ENCODE measurements at regions of chr14 and their contacts with region 1.

Region 1: GRCh38 chr14:28608851-28609828 is 157.4 kb upstream of the FOXG1 start:
- DNase-seq: peak; percentile 39 to 49
- H3K4me3 ChIP-seq: no peak overlapping the region
- H3K27ac ChIP-seq: no peak overlapping the region
- H3K4me1 ChIP-seq: no peaks in the 10 kb centered on the region
- H3K27me3 ChIP-seq: no peaks in the 10 kb centered on the region
- CTCF ChIP-seq: peak; percentile 83

Region 2: DNA sequence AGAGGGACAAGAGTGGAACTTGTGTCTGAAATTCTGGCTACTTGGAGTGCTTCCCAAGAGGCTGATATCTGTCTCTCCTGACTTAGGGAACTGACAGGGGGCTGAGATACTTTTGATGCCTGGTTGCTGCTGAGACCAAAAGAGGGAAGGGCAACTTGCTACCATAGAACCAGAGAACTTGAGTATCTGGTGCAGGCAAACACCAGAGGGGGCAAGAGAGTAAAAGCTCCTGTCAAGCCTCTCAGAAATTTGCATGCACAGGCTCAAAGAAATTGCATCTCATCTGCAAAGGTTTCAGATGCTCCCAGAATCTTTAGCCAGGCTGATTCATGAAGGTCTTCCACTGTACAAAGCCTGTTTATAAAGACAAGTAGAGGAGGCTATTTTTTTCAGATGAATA is 233.8 kb before region 1 on chr14:
- CTCF ChIA-PET with region 1: no interaction called
- POLR2A ChIA-PET with region 1: no interaction called
- intact Hi-C with region 1: loop called (anchors 2 kb)
- DNase-seq: peak in 1 of 2 experiments; percentile 3
- H3K4me3 ChIP-seq: no peak overlapping the region
- H3K27ac ChIP-seq: no peak overlapping the region
- H3K4me1 ChIP-seq: no peaks in the 10 kb centered on the region
- H3K27me3 ChIP-seq: no peaks in the 10 kb centered on the region
- CTCF ChIP-seq: peak; percentile 52

Region 3: GRCh38 chr14:28707814-28708213 is 98.7 kb after region 1 on chr14:
- CTCF ChIA-PET with region 1: no interaction called
- POLR2A ChIA-PET with region 1: no interaction called
- intact Hi-C with region 1: no loop called
- DNase-seq: no peak
- H3K4me3 ChIP-seq: no peak overlapping the region
- H3K27ac ChIP-seq: no peak overlapping the region
- H3K4me1 ChIP-seq: no peaks in the 10 kb centered on the region
- H3K27me3 ChIP-seq: no peaks in the 10 kb centered on the region
- CTCF ChIP-seq: no peak

Region 4: GRCh38 chr14:28751467-28752058 is 142.4 kb after region 1 on chr14:
- CTCF ChIA-PET with region 1: no interaction called
- POLR2A ChIA-PET with region 1: no interaction called
- intact Hi-C with region 1: no loop called
- DNase-seq: peak in 1 of 2 experiments; percentile 31
- H3K4me3 ChIP-seq: no peak overlapping the region
- H3K27ac ChIP-seq: no peak overlapping the region
- H3K4me1 ChIP-seq: no peaks in the 10 kb centered on the region
- H3K27me3 ChIP-seq: no peaks in the 10 kb centered on the region
- CTCF ChIP-seq: peak; percentile 70